Activated CD4-positive, alpha-beta T cell treated with anti-CD3 and anti-CD28 coated beads, Interleukin-2, amount 10 ng/mL, durations not matched to agents 24 days and 14 days (primary cell): ENCODE measurements at regions of chr4 and their contacts with region 1.

Region 1: GRCh38 chr4:81471588-81472288 is at the start of gene RASGEF1B:
- DNase-seq: peak; percentile 98
- H3K4me3 Mint-ChIP-seq: peak within 1 kb of the TSS; percentile 88
- H3K27ac Mint-ChIP-seq: peak within 1 kb of the TSS; percentile 93
- H3K4me1 Mint-ChIP-seq: peaks cover 30% of the 10 kb centered on the region
- H3K27me3 Mint-ChIP-seq: peaks cover 12% of the 10 kb centered on the region
- total RNA-seq, gene RASGEF1B: 3.9 and 5.5 TPM in 2 replicates

Region 2: GRCh38 chr4:81505004-81505598 is 33.4 kb after region 1 on chr4:
- intact Hi-C with region 1: loop called (anchors 1 kb)
- DNase-seq: peak; percentile 88
- H3K4me3 Mint-ChIP-seq: peak overlapping the region; percentile 61
- H3K27ac Mint-ChIP-seq: peak overlapping the region; percentile 23
- H3K4me1 Mint-ChIP-seq: peaks cover 29% of the 10 kb centered on the region
- H3K27me3 Mint-ChIP-seq: peaks cover 9% of the 10 kb centered on the region

Region 3: DNA sequence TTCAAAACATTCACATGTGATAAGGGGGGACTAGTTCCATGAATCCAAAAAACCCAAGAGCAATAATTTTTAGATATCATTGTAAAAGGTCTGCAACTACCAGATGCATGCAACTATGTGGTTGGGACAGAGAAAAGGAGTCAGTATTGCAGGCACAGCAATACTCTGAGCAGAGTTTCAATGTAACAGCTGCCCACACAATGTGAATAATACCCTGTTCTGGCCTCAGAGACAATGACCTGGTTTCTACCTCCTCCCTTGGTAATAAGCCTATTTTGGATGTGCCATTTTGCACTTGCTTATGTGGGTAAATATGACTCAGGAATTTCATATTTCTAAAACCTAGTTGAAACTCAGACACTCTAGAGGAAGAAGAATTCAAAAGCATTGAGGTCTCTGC is 194.8 kb after region 1 on chr4:
- intact Hi-C with region 1: loop called (anchors 5 kb)
- DNase-seq: no peak
- H3K4me3 Mint-ChIP-seq: no peak overlapping the region
- H3K27ac Mint-ChIP-seq: peak overlapping the region; percentile 27
- H3K4me1 Mint-ChIP-seq: peaks cover 16% of the 10 kb centered on the region
- H3K27me3 Mint-ChIP-seq: no peaks in the 10 kb centered on the region

Region 4: DNA sequence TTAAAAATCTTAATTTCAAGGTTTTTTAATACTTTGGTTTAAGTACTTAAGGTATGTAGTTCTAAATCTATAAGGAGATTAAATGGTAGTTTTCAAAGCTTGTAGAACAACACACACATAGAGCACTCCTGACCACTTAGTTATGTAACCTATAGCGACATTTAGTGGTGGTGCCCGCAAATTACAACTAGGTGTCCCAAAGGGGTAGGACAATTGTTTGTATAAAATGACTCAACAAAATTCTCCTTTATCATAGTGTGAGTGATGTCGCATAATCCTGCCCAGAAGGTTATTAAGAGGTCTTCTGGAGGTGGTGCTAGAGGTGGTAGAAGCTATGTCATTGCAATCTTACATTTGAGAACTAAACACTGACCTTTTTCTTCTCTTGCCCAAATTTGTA is 373.0 kb after region 1 on chr4:
- intact Hi-C with region 1: loop called (anchors 1 kb)
- DNase-seq: peak; percentile 90
- H3K4me3 Mint-ChIP-seq: no peak overlapping the region
- H3K27ac Mint-ChIP-seq: no peak overlapping the region
- H3K4me1 Mint-ChIP-seq: peaks cover 4% of the 10 kb centered on the region
- H3K27me3 Mint-ChIP-seq: no peaks in the 10 kb centered on the region

Region 5: DNA sequence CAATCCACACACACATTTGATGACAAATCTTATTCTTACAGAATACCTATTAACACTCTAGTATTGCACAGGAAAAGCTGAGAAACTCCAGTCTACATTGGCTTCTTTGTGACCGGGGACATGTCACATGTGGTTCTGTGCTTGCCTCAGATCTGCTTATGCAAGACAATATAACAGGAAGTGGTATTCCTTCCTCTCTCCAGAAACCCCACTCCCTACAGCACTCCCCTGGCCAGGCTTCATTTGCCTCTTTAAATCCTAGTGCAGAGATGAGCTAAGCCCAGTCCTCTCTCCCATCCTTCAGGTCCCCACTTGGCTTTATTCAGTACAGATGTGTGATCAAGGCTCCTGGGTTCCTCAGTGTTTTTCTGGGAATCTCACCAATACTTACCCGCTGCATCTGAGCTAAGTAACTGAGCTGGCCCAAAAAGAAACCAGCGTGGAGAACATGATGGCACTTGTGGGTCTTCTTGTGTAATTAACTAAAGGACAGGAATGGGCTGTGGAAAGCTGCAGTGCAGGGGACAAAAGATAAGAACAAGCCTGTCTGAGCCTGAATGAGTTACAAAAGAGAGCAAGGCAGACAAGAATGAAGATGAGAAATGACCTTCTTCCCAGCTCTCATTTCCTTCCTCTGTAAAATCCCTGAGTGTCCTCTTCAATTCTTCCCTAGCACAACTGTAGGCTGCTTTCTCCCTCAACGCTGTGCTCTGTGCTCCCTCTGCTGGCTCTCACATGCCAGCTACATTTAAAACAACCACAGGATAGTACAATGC is 796.5 kb after region 1 on chr4:
- intact Hi-C with region 1: loop called (anchors 1 kb)
- DNase-seq: peak; percentile 80
- H3K4me3 Mint-ChIP-seq: no peak overlapping the region
- H3K27ac Mint-ChIP-seq: no peak overlapping the region
- H3K4me1 Mint-ChIP-seq: peaks cover 11% of the 10 kb centered on the region
- H3K27me3 Mint-ChIP-seq: peaks cover 11% of the 10 kb centered on the region